ENCODE measurements at regions of chrX and their contacts with region 1.

Region 1: DNA sequence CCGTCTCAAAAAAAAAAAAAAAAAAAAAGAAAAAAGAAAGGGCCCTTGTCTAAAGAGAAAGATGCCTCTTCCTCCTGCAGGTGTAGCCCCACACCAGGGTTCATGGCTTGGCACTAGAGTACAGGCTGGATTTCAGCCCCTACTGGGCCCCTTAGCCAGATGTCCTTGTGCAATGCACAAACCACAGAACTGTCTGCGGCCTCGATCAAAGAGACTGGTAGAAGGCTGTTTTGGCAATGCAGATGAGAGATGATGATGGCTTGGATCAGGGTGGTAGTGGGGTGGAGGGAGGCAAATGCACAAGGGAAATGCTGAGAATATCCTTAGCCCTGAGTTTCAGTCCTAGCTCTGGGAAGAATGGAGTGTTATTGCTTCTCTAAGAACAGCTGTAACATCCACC is 26.5 kb upstream of the TSR2 start:
- DNase-seq: no peak
- ATAC-seq: no peak
- H3K4me3 ChIP-seq: no peak overlapping the region
- H3K27ac ChIP-seq: no peak overlapping the region
- H3K4me1 ChIP-seq: no peaks in the 10 kb centered on the region
- H3K27me3 ChIP-seq: no peaks in the 10 kb centered on the region
- CTCF ChIP-seq: no peak

Region 2: GRCh38 chrX:54397113-54397512 is 16.6 kb before region 1 on chrX:
- CTCF ChIA-PET with region 1: interaction called, 19 read pairs
- POLR2A ChIA-PET with region 1: no interaction called
- in situ Hi-C with region 1: no loop called
- intact Hi-C with region 1: no loop called
- DNase-seq: no peak
- ATAC-seq: no peak
- H3K4me3 ChIP-seq: no peak overlapping the region
- H3K27ac ChIP-seq: no peak overlapping the region
- H3K4me1 ChIP-seq: no peaks in the 10 kb centered on the region
- H3K27me3 ChIP-seq: no peaks in the 10 kb centered on the region
- CTCF ChIP-seq: no peak

Measured in Panc1 (cell line).